ENCODE measurements at regions of chr2 and their contacts with region 1.

Region 1: DNA sequence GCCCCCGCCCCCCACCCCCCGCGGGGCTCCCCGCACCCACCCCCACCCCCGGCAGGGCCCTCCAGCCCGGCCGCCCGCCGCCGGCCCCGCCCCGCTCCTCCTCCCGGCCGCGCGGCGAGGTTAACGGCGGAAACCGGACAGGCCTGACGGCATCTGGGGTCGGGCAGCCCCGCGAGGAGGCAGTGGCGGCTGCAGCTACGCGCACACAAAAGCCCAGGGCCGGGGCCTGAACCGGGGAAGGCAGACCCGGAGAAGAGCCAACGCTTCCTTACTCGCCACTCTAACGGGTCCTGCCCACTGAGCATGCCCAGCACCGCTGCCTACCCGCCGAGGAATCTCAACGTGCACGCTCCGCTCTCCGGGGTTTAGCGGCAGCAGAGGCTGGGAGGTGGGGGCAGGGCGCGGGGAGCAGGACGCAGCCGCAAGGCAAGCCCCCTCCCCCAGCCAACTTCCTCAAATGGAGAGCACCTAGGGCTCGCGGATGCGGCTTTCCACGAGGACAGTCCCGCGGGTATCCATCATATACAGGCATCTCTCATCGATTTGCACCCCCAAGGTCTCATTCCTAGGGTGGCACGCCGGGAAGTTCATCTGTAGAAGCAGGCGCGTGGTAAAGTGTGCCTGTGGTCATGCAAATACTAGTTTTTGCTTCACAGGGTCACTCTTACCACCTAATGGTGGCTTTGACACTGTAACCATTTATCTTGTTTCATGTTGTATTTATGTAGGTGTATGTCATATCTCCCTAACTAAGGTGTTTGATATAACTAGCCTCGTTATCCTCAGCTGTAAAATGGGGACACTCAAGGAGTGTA is at the start of gene MEMO1:
- H3K4me3 Mint-ChIP-seq: peak within 1 kb of the TSS; percentile 98
- H3K27ac Mint-ChIP-seq: peak within 1 kb of the TSS; percentile 92
- H3K4me1 Mint-ChIP-seq: peaks cover 35% of the 10 kb centered on the region
- H3K27me3 Mint-ChIP-seq: no peaks in the 10 kb centered on the region

Region 2: GRCh38 chr2:31372097-31372496 is 638.8 kb before region 1 on chr2:
- intact Hi-C with region 1: no loop called
- H3K4me3 Mint-ChIP-seq: no peak overlapping the region
- H3K27ac Mint-ChIP-seq: no peak overlapping the region
- H3K4me1 Mint-ChIP-seq: no peaks in the 10 kb centered on the region
- H3K27me3 Mint-ChIP-seq: peaks cover 3% of the 10 kb centered on the region

Region 3: GRCh38 chr2:31945572-31945935 is 65.3 kb before region 1 on chr2:
- intact Hi-C with region 1: loop called (anchors 5 kb)
- H3K4me3 Mint-ChIP-seq: no peak overlapping the region
- H3K27ac Mint-ChIP-seq: no peak overlapping the region
- H3K4me1 Mint-ChIP-seq: peaks cover 17% of the 10 kb centered on the region
- H3K27me3 Mint-ChIP-seq: no peaks in the 10 kb centered on the region

Region 4: DNA sequence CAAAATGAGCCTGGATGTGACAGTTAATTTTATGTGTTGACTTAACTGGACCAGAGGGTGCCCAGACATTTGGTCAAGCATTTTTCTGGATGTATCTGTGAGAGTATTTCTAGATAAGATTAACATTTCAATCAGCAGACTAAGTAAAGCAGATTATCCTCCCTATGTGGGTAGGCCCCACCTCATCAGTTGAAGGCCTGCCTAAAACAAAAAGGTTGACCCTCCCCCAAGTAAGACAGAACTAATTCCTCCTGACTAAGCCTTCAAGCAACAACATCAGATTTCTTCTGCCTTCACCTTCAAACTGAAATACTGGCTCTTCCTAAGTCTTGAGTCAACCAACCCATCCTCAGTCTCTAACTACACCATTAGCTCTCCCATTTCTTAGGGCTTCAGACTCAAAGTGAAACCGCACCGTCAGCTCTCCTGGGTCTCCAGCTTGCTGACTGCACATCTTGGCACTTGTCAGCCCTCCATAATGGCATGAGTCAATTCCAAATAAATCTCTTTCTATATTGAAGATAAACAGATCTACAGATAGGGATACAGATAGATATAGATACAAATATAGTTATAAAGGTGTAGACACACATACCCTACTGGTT is 48.0 kb before region 1 on chr2:
- intact Hi-C with region 1: loop called (anchors 5 kb)
- H3K4me3 Mint-ChIP-seq: no peak overlapping the region
- H3K27ac Mint-ChIP-seq: peak overlapping the region; percentile 83
- H3K4me1 Mint-ChIP-seq: peaks cover 51% of the 10 kb centered on the region
- H3K27me3 Mint-ChIP-seq: no peaks in the 10 kb centered on the region

Region 5: GRCh38 chr2:31980674-31981356 is 30.1 kb before region 1 on chr2:
- intact Hi-C with region 1: loop called (anchors 2 kb)
- H3K4me3 Mint-ChIP-seq: peak overlapping the region; percentile 45
- H3K27ac Mint-ChIP-seq: peak overlapping the region; percentile 78
- H3K4me1 Mint-ChIP-seq: peaks cover 45% of the 10 kb centered on the region
- H3K27me3 Mint-ChIP-seq: no peaks in the 10 kb centered on the region

Region 6: GRCh38 chr2:32384529-32384928 is 373.7 kb after region 1 on chr2:
- intact Hi-C with region 1: no loop called
- H3K4me3 Mint-ChIP-seq: no peak overlapping the region
- H3K27ac Mint-ChIP-seq: no peak overlapping the region
- H3K4me1 Mint-ChIP-seq: peaks cover 17% of the 10 kb centered on the region
- H3K27me3 Mint-ChIP-seq: no peaks in the 10 kb centered on the region

Measured in dendritic cell treated with granulocyte-macrophage colony-stimulating factor and Interleukin-4, amounts not matched to agents 40 ng/mL and 50 ng/mL, for 4 days (primary cell).